ENCODE measurements at regions of chr2 and their contacts with region 1.

Region 1: DNA sequence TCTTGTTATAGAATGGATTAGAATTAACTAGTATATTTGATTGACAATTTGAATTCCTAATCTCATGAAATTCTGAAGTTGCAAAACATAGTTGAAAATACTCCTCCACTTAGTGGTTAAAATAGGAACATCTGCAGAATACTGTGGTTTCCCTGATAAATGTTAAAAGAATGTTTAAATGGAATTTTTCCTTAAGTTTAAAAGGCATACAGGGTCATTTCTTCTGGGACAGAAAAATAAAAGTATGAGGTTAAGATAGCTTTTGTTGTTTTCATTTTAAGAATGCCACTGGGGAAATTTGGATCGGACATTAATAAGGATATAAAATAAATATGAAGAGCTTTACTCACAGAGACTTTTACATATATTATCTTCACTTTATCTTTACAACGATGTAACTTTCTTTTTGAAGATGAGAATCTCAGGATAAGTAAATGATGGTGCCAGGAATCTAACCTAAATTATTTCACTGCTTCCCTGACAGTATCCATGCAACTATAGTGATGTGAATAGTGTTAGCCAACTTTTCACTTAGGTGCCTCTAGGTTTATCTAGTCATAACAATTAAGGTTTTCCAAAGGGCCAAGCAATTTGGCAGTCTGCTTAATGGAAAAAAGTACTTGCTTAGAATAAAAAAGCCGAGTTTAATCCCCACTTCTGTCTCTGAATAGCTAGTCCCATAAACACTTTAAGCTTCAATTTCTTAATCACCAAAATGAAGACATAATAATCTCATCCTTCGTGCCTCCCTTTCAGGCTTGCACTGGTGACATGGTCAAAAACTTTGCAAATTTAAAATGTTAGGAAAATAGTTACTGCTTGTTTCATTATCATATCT is 151.8 kb upstream of the STK17B start:
- DNase-seq: no peak
- CTCF ChIP-seq: no peak

Region 2: GRCh38 chr2:196144513-196145126 is 178.6 kb before region 1 on chr2:
- CTCF ChIA-PET with region 1: interaction called, 3 read pairs
- POLR2A ChIA-PET with region 1: interaction called, 13 read pairs
- DNase-seq: no peak
- CTCF ChIP-seq: no peak

Measured in GM10248 (cell line).